Activated naive CD4-positive, alpha-beta T cell treated with anti-CD3 and anti-CD28 coated beads for 36 hours (primary cell): ENCODE measurements at regions of chr12 and their contacts with region 1.

Region 1: GRCh38 chr12:59149997-59150642 is 229.8 kb upstream of the LRIG3 start:
- DNase-seq: no peak
- H3K4me3 Mint-ChIP-seq: no peak overlapping the region
- H3K27ac Mint-ChIP-seq: no peak overlapping the region
- H3K4me1 Mint-ChIP-seq: no peaks in the 10 kb centered on the region
- H3K27me3 Mint-ChIP-seq: no peaks in the 10 kb centered on the region

Region 2: GRCh38 chr12:57983146-57983857 is 1166.8 kb before region 1 on chr12:
- CTCF ChIA-PET with region 1: interaction called, 3 read pairs
- intact Hi-C with region 1: loop called (anchors 2 kb)
- DNase-seq: peak; percentile 63
- H3K4me3 Mint-ChIP-seq: no peak overlapping the region
- H3K27ac Mint-ChIP-seq: no peak overlapping the region
- H3K4me1 Mint-ChIP-seq: no peaks in the 10 kb centered on the region
- H3K27me3 Mint-ChIP-seq: peaks cover 7% of the 10 kb centered on the region

Region 3: GRCh38 chr12:58346032-58346632 is 804.0 kb before region 1 on chr12:
- CTCF ChIA-PET with region 1: interaction called, 4 read pairs
- intact Hi-C with region 1: loop called (anchors 1 kb)
- DNase-seq: no peak
- H3K4me3 Mint-ChIP-seq: no peak overlapping the region
- H3K27ac Mint-ChIP-seq: no peak overlapping the region
- H3K4me1 Mint-ChIP-seq: no peaks in the 10 kb centered on the region
- H3K27me3 Mint-ChIP-seq: peaks cover 6% of the 10 kb centered on the region

Region 4: GRCh38 chr12:58452546-58452945 is 697.6 kb before region 1 on chr12:
- CTCF ChIA-PET with region 1: no interaction called
- intact Hi-C with region 1: no loop called
- DNase-seq: no peak
- H3K4me3 Mint-ChIP-seq: no peak overlapping the region
- H3K27ac Mint-ChIP-seq: no peak overlapping the region
- H3K4me1 Mint-ChIP-seq: no peaks in the 10 kb centered on the region
- H3K27me3 Mint-ChIP-seq: no peaks in the 10 kb centered on the region

Region 5: DNA sequence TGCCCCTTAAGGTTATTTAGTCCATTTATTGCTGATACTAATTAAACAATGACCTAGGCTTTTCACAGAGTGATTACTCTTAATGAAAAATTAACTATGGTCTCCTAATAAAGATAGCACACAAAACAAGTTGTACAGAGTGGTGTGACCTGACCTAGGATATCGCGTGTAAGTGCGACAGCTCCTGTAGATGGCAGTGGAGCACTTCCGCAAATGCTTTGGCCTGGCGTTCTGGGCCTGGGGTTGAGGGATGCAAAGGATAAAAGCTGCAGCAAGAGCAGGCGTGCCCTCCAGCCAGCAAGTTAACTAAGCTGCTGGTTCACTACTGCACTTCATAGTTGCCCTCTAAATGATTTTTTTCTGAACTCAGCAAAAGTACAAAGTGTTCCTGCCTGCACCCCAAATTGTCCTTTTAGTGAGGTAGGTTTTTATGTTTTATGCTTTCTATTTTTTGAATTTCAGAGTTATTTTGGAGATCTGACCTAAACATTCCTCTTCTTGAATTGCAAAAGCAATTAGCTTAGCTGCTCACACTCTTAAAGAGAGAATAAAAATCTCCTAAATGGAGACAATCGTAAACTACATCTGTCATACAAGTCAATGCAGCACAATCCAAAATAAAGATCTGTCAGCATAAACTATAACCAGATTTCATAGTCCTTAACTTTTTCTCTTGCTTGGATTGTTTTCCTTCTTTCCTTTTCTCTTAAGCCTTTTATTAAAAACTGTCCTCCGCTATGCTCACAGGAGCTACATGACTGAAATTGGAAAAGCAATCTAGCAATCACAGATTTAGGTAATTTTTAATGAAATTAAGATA is 609.4 kb before region 1 on chr12:
- CTCF ChIA-PET with region 1: interaction called, 6 read pairs
- intact Hi-C with region 1: loop called (anchors 1 kb)
- DNase-seq: peak; percentile 48
- H3K4me3 Mint-ChIP-seq: no peak overlapping the region
- H3K27ac Mint-ChIP-seq: no peak overlapping the region
- H3K4me1 Mint-ChIP-seq: no peaks in the 10 kb centered on the region
- H3K27me3 Mint-ChIP-seq: no peaks in the 10 kb centered on the region

Region 6: DNA sequence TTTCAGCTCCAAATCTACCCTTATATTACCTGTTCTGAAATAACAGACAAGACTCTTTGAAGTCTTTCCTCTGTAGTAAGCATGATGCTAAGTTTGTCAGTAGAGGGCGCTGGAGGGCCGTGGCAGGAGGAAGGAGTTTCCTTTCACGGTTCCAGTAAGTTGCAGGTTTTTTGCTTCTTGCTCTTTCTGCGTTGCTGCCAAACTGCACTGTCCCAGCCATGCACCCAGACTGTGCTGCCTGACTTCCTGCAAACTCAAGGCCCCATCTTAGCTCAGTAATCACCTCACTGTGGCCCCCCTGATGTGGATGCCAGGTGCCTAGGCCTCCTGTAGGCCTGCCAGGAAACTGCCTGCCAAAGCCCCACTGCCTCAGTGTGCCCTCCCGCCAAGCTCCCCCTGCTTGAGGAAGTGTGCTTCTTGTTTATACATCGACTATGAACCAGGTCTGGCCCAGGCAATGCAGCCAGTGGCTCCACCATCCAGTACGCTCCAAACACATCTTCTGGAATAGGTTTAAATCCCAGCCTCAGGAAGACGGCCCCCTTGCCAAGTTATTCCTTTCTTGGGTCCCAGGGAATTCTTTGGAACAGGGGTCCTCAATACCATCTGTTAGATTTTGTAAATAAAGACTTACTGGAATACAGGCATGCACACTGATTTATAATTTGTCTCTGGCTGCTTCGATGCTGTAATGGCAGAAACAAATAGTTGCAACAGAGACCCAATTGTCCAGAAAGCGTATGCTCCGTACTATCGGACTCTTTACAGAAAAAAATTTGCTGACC is 36.1 kb before region 1 on chr12:
- CTCF ChIA-PET with region 1: interaction called, 6 read pairs
- intact Hi-C with region 1: loop called (anchors 1 kb)
- DNase-seq: peak; percentile 81
- H3K4me3 Mint-ChIP-seq: no peak overlapping the region
- H3K27ac Mint-ChIP-seq: no peak overlapping the region
- H3K4me1 Mint-ChIP-seq: no peaks in the 10 kb centered on the region
- H3K27me3 Mint-ChIP-seq: no peaks in the 10 kb centered on the region